ENCODE measurements at regions of chr17 and their contacts with region 1.

Region 1: GRCh38 chr17:77140166-77140878 is 447 bp upstream of the SEC14L1 start:
- DNase-seq: peak; percentile 97
- H3K4me3 ChIP-seq: peak overlapping the region; percentile 9 to 63 (median 53)
- H3K27ac ChIP-seq: peak overlapping the region; percentile 95
- H3K4me1 ChIP-seq: peaks cover 31% of the 10 kb centered on the region
- H3K27me3 ChIP-seq: no peaks in the 10 kb centered on the region
- CTCF ChIP-seq: peak in 1 of 2 donors; percentile 2

Region 2: GRCh38 chr17:77096570-77097214 is 43.6 kb before region 1 on chr17:
- CTCF ChIA-PET with region 1: no interaction called
- dilution Hi-C with region 1: no loop called
- in situ Hi-C with region 1: no loop called
- intact Hi-C with region 1: loop called (anchors 1 kb)
- DNase-seq: peak; percentile 26
- H3K4me3 ChIP-seq: no peak overlapping the region
- H3K27ac ChIP-seq: no peak overlapping the region
- H3K4me1 ChIP-seq: peaks cover 9% of the 10 kb centered on the region
- H3K27me3 ChIP-seq: no peaks in the 10 kb centered on the region
- CTCF ChIP-seq: peak; percentile 69 to 87

Region 3: GRCh38 chr17:77127735-77128361 is 12.5 kb before region 1 on chr17:
- CTCF ChIA-PET with region 1: interaction called, 5 read pairs
- dilution Hi-C with region 1: no loop called
- in situ Hi-C with region 1: no loop called
- intact Hi-C with region 1: loop called (anchors 1 kb)
- DNase-seq: peak; percentile 81
- H3K4me3 ChIP-seq: no peak overlapping the region
- H3K27ac ChIP-seq: peak overlapping the region; percentile 18
- H3K4me1 ChIP-seq: peaks cover 68% of the 10 kb centered on the region
- H3K27me3 ChIP-seq: no peaks in the 10 kb centered on the region
- CTCF ChIP-seq: no peak

Region 4: GRCh38 chr17:77214743-77215142 is 74.4 kb after region 1 on chr17:
- CTCF ChIA-PET with region 1: no interaction called
- dilution Hi-C with region 1: no loop called
- in situ Hi-C with region 1: no loop called
- intact Hi-C with region 1: no loop called
- DNase-seq: peak; percentile 18
- H3K4me3 ChIP-seq: no peak overlapping the region
- H3K27ac ChIP-seq: no peak overlapping the region
- H3K4me1 ChIP-seq: no peaks in the 10 kb centered on the region
- H3K27me3 ChIP-seq: no peaks in the 10 kb centered on the region
- CTCF ChIP-seq: peak; percentile 36 to 60

Region 5: GRCh38 chr17:77242118-77242851 is 102.0 kb after region 1 on chr17:
- CTCF ChIA-PET with region 1: no interaction called
- dilution Hi-C with region 1: no loop called
- in situ Hi-C with region 1: no loop called
- intact Hi-C with region 1: no loop called
- DNase-seq: no peak
- H3K4me3 ChIP-seq: no peak overlapping the region
- H3K27ac ChIP-seq: no peak overlapping the region
- H3K4me1 ChIP-seq: peaks cover 7% of the 10 kb centered on the region
- H3K27me3 ChIP-seq: no peaks in the 10 kb centered on the region
- CTCF ChIP-seq: peak in 1 of 2 donors; percentile 8

Region 6: GRCh38 chr17:77254951-77255825 is 114.9 kb after region 1 on chr17:
- CTCF ChIA-PET with region 1: no interaction called
- dilution Hi-C with region 1: no loop called
- in situ Hi-C with region 1: no loop called
- intact Hi-C with region 1: loop called (anchors 1 kb)
- DNase-seq: peak; percentile 98
- H3K4me3 ChIP-seq: peak overlapping the region in 2 of 3 experiments; percentile 7 to 25
- H3K27ac ChIP-seq: peak overlapping the region; percentile 92
- H3K4me1 ChIP-seq: peaks cover 36% of the 10 kb centered on the region
- H3K27me3 ChIP-seq: no peaks in the 10 kb centered on the region
- CTCF ChIP-seq: no peak

Measured in mammary epithelial cell (primary cell).